CD4-positive, alpha-beta memory T cell (primary cell): ENCODE measurements at regions of chr17 and their contacts with region 1.

Region 1: DNA sequence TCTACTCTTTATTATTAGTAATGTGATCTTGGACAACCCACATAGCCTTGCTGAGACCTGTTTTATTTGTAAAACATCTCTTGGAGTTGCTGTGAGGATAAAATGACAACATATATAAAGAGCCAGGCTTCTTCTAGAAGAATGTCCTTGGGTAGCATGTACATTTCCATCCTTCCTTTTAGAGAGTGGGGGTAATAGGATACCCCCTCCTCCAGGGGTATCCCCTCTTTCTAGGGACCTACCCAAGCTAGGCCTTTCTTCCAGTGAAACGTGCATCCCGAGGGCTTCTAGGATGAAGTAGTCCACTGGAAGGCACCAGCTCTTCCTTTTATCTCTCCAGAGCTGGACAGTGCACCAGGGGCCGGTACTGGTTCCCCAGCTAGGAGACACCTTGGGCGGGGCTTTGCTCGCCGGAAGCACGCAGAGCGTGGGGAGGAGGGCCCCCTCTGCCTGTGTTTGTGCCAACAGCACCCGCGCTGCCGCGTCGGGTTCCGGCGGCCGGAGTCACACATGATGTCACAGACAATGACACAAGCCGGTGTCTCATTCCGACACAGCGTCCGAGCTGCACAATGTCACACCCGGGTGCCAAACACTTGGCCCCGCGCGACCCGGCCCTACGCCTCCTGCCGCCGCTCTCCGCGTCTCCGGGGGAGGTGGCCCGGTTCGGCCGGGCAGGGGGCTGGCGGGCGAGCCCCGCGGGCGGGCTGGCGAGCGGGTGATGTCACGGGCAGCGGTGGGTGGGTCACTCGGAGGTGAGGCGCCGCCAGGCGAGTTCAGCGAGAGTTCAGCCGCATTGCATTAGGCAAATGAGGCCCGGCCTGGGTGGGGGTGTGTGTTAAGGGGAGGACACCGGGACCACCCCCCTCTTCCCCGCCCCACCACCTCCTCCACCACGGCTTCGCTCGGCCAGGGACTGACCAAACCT is 23.4 kb downstream of the GJD3 start:
- DNase-seq: peak; percentile 84 to 95 (median 87)
- H3K4me3 ChIP-seq: peak overlapping the region; percentile 51 to 69
- H3K4me3 Mint-ChIP-seq: peak overlapping the region; percentile 84 to 88 (median 86)
- H3K27ac ChIP-seq: peak overlapping the region; percentile 90
- H3K27ac Mint-ChIP-seq: peak overlapping the region; percentile 90 to 99 (median 98)
- H3K4me1 ChIP-seq: peaks cover 85% of the 10 kb centered on the region
- H3K4me1 Mint-ChIP-seq: peaks cover 40 to 81% (median 69%) of the 10 kb centered on the region in 4 donors
- H3K27me3 ChIP-seq: no peaks in the 10 kb centered on the region
- H3K27me3 Mint-ChIP-seq: no peaks in the 10 kb centered on the region

Region 2: DNA sequence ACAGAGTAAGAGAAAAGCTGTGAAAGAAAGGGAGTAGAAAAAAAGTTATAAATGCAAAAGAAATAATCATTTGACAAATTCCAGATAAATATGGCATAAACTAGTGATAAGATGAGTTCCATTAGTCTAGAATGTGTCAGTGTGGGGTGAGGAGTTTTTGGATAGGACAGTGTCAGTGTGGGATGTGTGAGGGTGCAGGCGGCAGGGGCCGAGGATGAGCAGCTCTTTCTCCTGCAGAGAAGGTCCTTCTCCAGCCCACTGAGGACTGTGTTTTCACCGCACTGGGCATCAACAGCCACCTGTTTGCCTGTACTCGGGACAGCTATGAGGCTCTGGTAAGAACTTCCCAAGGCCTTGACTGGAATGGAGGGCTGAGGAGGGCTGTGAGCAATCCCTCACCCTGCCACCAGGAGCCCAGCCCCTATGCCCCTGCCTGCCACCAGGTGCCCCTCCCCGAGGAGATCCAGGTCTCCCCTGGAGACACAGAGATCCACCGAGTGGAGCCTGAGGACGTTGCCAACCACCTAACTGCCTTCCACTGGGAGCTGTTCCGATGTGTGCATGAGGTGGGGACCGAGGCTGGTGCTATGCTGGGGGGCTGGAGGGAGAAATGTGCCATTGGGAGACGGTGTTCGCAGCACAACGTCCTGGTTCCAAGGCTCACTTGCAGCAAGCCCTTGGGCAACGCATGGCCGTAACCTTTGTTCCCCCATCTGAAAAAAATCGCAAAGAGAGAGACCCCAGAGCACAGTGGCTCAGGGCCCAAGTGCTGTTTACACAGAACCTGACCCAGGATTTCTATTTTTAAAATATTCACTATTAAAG is 150.7 kb before region 1 on chr17:
- CTCF ChIA-PET with region 1: no interaction called
- POLR2A ChIA-PET with region 1: no interaction called
- intact Hi-C with region 1: no loop called
- DNase-seq: peak in 1 of 5 donors; percentile 14
- H3K4me3 ChIP-seq: no peak overlapping the region
- H3K4me3 Mint-ChIP-seq: peak overlapping the region; percentile 78 to 86 (median 82)
- H3K27ac ChIP-seq: no peak overlapping the region
- H3K27ac Mint-ChIP-seq: peak overlapping the region in 4 of 7 donors; percentile 23 to 80 (median 68)
- H3K4me1 ChIP-seq: peaks cover 6% of the 10 kb centered on the region
- H3K4me1 Mint-ChIP-seq: peaks cover 0 to 11% (median 7%) of the 10 kb centered on the region in 4 donors
- H3K27me3 ChIP-seq: no peaks in the 10 kb centered on the region
- H3K27me3 Mint-ChIP-seq: no peaks in the 10 kb centered on the region

Region 3: GRCh38 chr17:40323391-40324381 is 17.5 kb before region 1 on chr17:
- CTCF ChIA-PET with region 1: interaction called, 46 read pairs
- POLR2A ChIA-PET with region 1: interaction called, 1,054 read pairs
- intact Hi-C with region 1: loop called (anchors 1 kb)
- DNase-seq: peak; percentile 73 to 97 (median 81)
- H3K4me3 ChIP-seq: peak overlapping the region; percentile 80 to 95
- H3K4me3 Mint-ChIP-seq: peak overlapping the region; percentile 91 to 98 (median 96)
- H3K27ac ChIP-seq: peak overlapping the region; percentile 99
- H3K27ac Mint-ChIP-seq: peak overlapping the region; percentile 96 to 100 (median 99)
- H3K4me1 ChIP-seq: peaks cover 91% of the 10 kb centered on the region
- H3K4me1 Mint-ChIP-seq: peaks cover 65 to 97% (median 77%) of the 10 kb centered on the region in 4 donors
- H3K27me3 ChIP-seq: no peaks in the 10 kb centered on the region
- H3K27me3 Mint-ChIP-seq: peaks cover 1 to 3% of the 10 kb centered on the region in 2 donors

Region 4: DNA sequence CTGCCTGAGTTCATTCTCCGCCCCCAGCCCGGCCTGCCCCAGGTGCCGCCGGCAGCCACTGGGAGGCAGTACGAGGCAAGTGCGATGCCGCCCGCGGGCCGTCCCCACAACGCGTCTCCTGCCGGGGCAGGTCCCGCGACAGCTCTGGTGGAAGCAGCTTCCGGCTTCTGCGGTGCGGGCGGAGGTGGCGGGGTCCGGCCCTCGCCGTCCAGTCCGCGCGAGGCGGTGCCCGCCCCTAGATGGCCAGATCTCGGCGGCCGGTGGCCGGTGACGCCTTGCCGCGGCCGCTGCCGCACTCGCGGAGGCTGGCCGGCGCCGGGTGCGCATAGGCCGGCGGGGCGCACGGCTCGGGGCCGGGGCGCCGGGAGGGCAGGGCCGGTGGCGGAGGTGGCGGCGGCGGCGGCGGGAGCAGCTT is 21.6 kb after region 1 on chr17:
- CTCF ChIA-PET with region 1: interaction called, 5 read pairs
- POLR2A ChIA-PET with region 1: no interaction called
- intact Hi-C with region 1: loop called (anchors 2 kb)
- DNase-seq: peak; percentile 72 to 76 (median 74)
- H3K4me3 ChIP-seq: peak overlapping the region in 1 of 2 donors; percentile 47
- H3K4me3 Mint-ChIP-seq: peak overlapping the region in 7 of 8 donors; percentile 39 to 82 (median 64)
- H3K27ac ChIP-seq: no peak overlapping the region
- H3K27ac Mint-ChIP-seq: peak overlapping the region in 3 of 7 donors; percentile 11 to 69 (median 57)
- H3K4me1 ChIP-seq: peaks cover 21% of the 10 kb centered on the region
- H3K4me1 Mint-ChIP-seq: peaks cover 5 to 12% (median 9%) of the 10 kb centered on the region in 4 donors
- H3K27me3 ChIP-seq: no peaks in the 10 kb centered on the region
- H3K27me3 Mint-ChIP-seq: peaks cover 0 to 7% of the 10 kb centered on the region in 2 donors